Activated naive CD4-positive, alpha-beta T cell treated with anti-CD3 and anti-CD28 coated beads for 36 hours (primary cell): ENCODE measurements at regions of chr1 and their contacts with region 1.

Region 1: DNA sequence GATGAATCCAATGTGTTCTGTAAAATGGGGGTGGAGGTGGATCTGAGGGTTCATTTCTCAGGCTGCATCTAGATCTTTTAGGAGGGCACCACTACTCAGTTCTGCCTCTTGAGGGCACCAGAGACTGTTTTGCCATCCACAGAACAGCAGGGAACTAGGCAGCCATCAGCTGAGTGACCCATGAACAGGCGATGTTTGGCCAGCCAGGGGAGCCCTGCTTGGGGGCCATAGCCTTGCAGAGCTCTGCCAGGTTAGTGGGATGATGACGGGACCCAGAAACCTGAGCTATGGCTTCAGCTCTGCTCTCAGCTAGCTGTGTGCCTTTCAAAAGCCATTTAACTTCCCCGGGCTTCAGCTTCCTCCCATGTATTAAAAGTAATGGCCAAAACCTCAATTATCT is 13.4 kb upstream of the NOS1AP start:
- DNase-seq: peak; percentile 70
- H3K4me3 Mint-ChIP-seq: no peak overlapping the region
- H3K27ac Mint-ChIP-seq: no peak overlapping the region
- H3K4me1 Mint-ChIP-seq: no peaks in the 10 kb centered on the region
- H3K27me3 Mint-ChIP-seq: no peaks in the 10 kb centered on the region

Region 2: DNA sequence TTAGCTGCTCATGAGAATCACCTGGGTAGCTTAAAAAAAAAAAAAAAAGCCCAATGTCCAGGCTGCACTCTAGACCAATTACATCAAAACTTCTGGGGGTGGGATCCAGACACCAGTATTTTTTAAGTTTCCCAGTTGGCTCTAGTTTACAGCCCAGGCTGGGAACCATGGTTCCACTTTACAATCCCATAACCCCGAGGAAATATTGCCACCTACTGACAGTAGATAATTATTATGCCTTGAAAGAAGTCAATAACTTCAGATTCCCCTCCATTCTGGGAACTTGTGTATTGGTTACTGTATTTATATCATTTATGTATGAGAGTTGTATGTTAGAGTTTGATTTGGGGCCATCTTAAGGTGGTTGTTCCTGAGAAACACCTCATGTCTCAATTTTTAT is 220.4 kb after region 1 on chr1:
- CTCF ChIA-PET with region 1: interaction called, 13 read pairs
- intact Hi-C with region 1: loop called (anchors 1 kb)
- DNase-seq: no peak
- H3K4me3 Mint-ChIP-seq: no peak overlapping the region
- H3K27ac Mint-ChIP-seq: no peak overlapping the region
- H3K4me1 Mint-ChIP-seq: no peaks in the 10 kb centered on the region
- H3K27me3 Mint-ChIP-seq: peaks cover 15% of the 10 kb centered on the region

Region 3: DNA sequence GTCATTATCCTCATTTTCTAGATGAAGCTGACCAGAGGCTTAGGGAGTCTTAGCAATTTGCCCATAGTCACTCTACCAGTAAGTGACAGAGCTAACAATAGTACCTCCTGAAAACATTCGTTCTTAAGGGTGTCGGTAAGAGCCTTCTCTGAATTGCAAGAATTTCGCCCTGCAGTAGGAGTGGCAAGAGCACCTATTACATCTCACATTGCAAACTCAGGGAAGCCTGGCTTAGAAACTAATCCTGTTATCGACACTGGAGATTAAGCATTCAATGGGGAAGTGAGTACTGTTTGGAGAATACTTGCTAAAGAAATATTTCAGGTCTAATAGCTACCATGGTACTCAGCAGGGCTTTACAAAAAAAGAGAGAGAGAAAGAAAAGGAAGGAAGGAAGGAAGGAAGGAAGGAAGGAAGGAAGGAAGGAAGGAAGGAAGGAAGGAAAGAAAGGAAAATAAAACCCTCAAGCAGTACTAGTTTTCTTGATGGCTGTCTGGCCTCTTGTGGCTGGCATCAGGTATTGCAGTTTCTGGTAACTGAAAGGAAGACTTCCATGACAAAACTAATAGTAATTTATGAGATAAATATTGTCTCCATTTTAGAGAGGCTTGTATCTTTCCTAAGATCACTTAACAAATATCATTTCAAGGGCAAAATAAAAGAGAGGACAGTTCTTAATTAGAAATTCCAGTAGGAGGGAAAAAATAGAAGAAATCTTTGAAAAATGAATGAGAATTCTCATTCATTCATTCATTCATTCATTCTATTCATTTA is 335.9 kb after region 1 on chr1:
- CTCF ChIA-PET with region 1: interaction called, 10 read pairs
- intact Hi-C with region 1: loop called (anchors 1 kb)
- DNase-seq: peak; percentile 48
- H3K4me3 Mint-ChIP-seq: no peak overlapping the region
- H3K27ac Mint-ChIP-seq: no peak overlapping the region
- H3K4me1 Mint-ChIP-seq: no peaks in the 10 kb centered on the region
- H3K27me3 Mint-ChIP-seq: peaks cover 14% of the 10 kb centered on the region

Region 4: DNA sequence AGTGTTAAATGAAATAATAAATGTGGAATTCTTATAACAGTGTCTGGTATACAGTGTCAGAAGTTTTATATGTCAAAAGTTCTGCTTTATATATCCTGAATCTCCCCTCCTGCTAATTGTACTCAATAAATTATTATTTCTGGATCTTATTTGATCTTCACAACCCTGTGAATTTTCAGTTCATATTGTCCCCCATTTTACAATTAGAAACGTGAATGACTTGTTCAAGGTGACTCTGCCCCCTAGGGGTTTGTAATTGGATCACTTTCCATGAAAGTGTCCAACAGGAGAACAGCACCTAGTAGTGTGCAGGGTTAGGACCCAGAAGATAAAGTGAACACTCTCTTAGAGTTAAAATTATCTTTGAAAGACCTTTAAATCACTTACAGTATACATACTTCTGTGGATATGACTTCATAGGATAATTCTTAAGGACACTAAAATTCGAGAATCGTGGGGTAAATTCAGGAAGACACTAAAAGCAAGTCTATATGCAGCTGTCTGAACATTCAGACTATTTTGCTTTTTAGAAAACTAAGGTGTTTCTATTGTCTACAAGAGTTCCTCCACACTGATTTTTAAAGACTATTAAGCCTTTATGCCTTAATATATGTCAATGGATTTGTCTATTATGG is 571.7 kb after region 1 on chr1:
- CTCF ChIA-PET with region 1: interaction called, 3 read pairs
- intact Hi-C with region 1: loop called (anchors 1 kb)
- DNase-seq: no peak
- H3K4me3 Mint-ChIP-seq: no peak overlapping the region
- H3K27ac Mint-ChIP-seq: no peak overlapping the region
- H3K4me1 Mint-ChIP-seq: no peaks in the 10 kb centered on the region
- H3K27me3 Mint-ChIP-seq: peaks cover 3% of the 10 kb centered on the region